ENCODE measurements at regions of chr10 and their contacts with region 1.

Region 1: DNA sequence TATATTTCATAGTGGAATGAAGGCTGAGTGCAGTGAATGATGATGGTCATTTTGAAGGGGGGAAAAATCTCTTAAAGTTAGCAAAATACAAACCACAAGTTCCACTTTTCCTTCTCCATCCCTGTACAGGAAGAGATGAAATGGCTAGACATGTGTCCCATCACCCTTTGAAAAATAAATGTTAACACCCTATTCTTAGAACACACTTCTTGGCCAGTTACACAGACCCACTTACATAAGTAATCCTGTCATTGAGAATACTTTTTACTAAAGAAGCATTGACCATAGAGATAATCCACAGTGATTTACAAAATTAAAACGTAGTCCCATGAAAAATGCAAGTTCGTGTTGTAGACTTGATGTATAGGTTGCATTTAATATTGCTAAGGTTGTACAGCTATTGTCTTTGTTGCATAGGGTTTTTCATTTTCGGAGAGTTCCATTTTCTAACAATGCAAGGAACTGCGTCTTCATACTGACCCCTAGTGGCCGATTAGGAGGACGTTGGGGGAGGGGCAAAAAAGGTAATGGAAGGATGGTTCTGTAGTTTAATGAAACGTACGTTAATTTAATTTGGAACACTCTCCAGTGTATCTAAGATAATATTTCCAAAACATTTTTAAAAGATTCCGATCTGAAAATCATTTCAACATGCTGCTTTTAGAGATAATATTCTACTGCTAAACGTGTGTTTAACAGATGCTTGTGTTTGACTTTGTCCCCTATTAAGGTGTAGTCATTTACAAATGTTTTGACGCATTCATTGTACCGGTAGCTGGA is 60.9 kb downstream of the ARMC3 start:
- DNase-seq: peak; percentile 54 to 56
- H3K4me3 ChIP-seq: no peak overlapping the region
- H3K27ac ChIP-seq: no peak overlapping the region
- H3K4me1 ChIP-seq: peaks cover 0 to 4% of the 10 kb centered on the region in 2 donors
- H3K27me3 ChIP-seq: no peaks in the 10 kb centered on the region
- CTCF ChIP-seq: peak; percentile 60 to 95 (median 90)
- POLR2A ChIP-seq: no peak

Region 2: DNA sequence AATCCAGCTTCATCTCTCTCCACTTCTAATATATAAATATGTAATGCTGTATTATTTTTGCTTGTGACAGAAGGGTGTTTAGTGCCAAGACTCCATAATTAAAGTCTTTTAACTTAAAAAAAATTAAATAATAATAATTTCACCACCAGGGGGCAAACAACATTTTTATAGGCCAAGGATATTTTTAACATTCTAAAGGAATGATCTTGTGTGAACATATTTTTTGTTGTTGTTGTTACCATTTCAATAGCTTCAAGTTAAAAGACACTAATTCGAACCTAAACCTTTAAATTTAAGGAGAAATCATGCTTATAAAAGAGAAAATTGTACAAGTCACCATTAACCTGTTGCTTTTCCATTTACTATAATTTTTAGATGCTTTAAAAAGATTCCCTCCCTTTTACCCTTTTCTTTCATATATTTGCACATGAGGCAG is 977.8 kb before region 1 on chr10:
- intact Hi-C with region 1: loop called (anchors 5 kb)
- DNase-seq: no peak
- H3K4me3 ChIP-seq: no peak overlapping the region
- H3K27ac ChIP-seq: no peak overlapping the region
- H3K4me1 ChIP-seq: no peaks in the 10 kb centered on the region
- H3K27me3 ChIP-seq: no peaks in the 10 kb centered on the region
- CTCF ChIP-seq: peak in 4 of 6 experiments; percentile 28 to 62 (median 52)
- POLR2A ChIP-seq: no peak

Region 3: DNA sequence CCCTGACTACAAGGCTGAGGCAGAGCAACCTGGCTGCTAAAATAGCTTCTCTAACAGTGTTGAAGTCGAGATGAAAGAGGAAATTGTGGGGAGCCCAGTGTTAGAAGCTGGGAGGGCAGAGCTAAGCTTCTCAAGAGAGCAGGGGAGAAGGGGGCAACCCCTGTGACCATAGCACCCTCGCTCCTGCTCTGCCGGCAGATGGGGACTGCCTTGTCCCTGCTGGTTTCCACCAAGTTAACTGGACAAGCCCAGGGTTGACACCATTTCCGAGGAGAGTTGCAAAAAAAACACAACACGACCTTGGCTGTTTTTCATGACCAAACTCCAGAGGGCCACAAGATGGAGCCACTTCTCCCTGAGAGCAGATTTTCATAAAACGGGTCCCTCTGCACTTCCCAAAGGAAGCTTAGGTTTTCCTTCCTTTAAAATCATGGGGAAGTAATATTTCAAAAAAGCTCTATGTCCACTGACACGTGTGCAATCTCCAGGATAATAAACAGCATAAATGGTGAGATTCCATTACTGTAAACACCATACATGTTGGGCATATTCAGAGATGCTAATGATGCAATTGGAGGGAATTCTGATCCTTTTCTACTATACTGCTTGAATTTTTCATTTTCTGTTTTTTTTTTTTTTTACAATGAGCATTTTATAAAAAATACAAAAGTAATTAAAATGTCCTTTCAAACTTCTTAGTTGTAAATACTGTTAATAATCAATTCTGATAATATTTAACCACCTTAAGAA is 414.8 kb before region 1 on chr10:
- intact Hi-C with region 1: loop called (anchors 10 kb)
- DNase-seq: no peak
- H3K4me3 ChIP-seq: no peak overlapping the region
- H3K27ac ChIP-seq: no peak overlapping the region
- H3K4me1 ChIP-seq: no peaks in the 10 kb centered on the region
- H3K27me3 ChIP-seq: no peaks in the 10 kb centered on the region
- CTCF ChIP-seq: peak in 4 of 6 experiments; percentile 15 to 50 (median 40)
- POLR2A ChIP-seq: no peak

Region 4: DNA sequence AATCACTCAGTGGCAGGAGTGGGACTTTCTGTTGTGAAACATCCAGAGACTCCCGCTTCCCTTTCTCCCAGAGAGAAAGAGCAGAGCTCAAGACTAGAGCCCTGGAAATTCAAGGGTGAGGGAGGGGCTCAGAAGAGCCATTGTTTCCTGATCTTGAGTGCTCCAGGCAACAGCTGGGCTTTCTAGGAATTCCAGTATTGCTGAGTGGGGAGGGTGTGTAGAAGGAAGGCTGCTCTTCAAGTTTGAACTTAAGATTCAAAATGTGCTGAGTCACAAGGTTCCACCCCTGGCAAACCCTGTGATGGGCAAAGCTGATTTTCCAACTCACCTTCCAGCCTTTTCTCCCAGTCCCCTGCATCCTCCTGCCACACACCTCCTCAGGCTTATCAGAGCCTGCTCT is 64.3 kb after region 1 on chr10:
- intact Hi-C with region 1: no loop called
- DNase-seq: peak; percentile 85 to 90
- H3K4me3 ChIP-seq: no peak overlapping the region
- H3K27ac ChIP-seq: no peak overlapping the region
- H3K4me1 ChIP-seq: peaks cover 0 to 4% of the 10 kb centered on the region in 2 donors
- H3K27me3 ChIP-seq: no peaks in the 10 kb centered on the region
- CTCF ChIP-seq: no peak
- POLR2A ChIP-seq: no peak

Region 5: DNA sequence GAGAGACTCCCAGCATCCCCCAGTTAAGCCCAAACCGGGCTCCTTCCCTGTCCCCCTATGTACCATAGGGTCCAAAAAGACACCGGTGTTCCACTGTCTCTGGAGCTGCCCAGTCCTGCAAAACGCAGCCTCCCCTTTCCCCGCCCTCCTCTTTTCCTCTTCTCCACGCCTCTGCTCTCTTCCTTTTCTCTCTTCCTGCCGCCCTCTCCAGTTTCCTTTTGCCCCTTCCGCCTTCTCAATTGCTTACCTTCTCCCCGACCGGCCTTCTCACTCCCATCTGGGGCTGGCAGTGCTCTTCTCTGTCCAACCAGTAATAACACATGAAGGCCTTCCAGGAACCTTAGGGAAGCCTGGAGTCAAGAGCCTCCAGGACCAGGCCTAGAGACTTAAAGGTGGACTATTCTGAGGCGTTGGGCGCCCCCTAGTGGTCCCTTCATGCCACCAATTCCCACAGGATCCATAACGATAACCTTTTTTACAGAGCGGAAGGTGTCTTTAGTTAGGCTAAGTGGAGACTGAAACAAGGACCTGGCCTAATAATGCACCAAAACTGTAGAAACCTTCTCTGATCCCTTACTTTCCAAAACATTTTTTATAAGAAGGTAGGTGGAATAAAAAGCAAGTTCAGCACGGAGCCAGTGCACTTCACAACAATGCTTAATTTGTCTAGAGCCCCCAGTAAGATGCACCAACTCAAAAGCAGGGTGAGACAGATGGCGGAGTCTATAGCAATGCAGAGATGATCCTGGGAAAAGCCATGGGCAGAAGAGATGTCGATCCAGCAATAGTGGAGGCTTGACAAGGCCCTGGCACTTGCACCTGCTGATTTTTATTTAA is 79.4 kb after region 1 on chr10:
- intact Hi-C with region 1: no loop called
- DNase-seq: peak; percentile 84 to 87
- H3K4me3 ChIP-seq: no peak overlapping the region
- H3K27ac ChIP-seq: no peak overlapping the region
- H3K4me1 ChIP-seq: peaks cover 0 to 8% of the 10 kb centered on the region in 2 donors
- H3K27me3 ChIP-seq: no peaks in the 10 kb centered on the region
- CTCF ChIP-seq: peak; percentile 57 to 87 (median 80)
- POLR2A ChIP-seq: no peak